ENCODE measurements at regions of chr4 and their contacts with region 1.

Region 1: DNA sequence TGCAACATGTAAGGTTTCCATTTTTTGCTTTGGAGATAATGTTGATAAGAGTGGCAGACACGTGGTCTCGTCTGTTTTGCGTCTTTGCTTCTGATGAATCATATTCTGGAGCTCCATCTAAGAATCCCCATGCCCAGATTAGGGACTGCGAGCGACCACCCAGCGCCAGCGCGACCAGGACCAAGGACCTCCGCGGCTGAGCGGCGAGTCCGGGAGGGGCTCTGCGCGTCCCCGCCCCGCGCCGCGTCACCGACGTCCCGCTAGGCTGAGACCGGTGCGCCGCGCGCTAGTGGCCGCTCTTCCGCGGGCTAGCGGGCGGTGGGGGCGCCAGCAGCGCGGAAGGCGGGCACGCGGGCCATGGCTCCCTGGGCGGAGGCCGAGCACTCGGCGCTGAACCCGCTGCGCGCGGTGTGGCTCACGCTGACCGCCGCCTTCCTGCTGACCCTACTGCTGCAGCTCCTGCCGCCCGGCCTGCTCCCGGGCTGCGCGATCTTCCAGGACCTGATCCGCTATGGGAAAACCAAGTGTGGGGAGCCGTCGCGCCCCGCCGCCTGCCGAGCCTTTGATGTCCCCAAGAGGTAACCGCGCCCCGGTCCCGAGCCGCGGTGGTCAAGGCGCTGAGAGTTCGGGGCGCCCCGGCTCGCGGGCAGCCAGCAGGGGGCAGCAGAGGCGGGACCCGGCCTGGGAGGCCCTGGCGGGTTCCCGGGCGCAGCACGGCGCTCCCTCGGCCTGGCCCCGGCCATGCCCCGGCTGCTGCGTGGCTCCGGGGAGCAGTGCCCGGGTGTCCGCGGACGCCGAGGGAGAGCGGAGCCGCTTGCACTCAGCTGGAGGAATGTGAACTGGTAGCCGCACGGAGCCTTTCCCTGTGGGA is at the start of gene SRD5A3:
- DNase-seq: peak; percentile 85
- H3K4me3 ChIP-seq: peak within 1 kb of the TSS; percentile 51 to 75 (median 65)
- H3K27ac ChIP-seq: peak within 1 kb of the TSS; percentile 69
- H3K4me1 ChIP-seq: peaks cover 11% of the 10 kb centered on the region
- H3K27me3 ChIP-seq: no peaks in the 10 kb centered on the region
- CTCF ChIP-seq: peak; percentile 84 to 92
- POLR2A ChIP-seq: peak; percentile 69
- total RNA-seq, gene SRD5A3: 24.3 and 30.4 TPM in 2 replicates

Region 2: DNA sequence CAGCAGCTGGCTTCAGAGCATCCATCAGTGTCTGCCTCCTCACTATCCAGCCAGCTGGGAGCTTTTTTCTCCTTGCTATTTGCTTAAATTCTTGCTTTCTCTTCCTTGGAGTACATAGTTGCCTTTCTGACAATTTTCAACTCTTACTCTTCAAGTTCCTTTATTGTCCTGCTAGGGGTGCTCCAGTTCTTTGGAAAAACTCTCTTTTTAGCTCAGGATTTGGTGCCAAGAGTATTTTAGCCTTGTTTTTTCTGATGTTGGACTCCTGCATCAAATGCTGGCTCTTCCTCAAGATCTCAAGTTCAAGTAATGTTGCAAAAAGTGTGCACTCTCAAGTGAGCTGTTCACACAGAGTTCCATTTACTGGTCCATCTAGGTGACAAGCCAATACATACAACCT is 347.2 kb before region 1 on chr4:
- CTCF ChIA-PET with region 1: interaction called, 11 read pairs
- POLR2A ChIA-PET with region 1: no interaction called
- dilution Hi-C with region 1: no loop called
- intact Hi-C with region 1: no loop called
- DNase-seq: peak; percentile 65
- H3K4me3 ChIP-seq: no peak overlapping the region
- H3K27ac ChIP-seq: no peak overlapping the region
- H3K4me1 ChIP-seq: no peaks in the 10 kb centered on the region
- H3K27me3 ChIP-seq: peaks cover 0 to 2% of the 10 kb centered on the region in 2 experiments
- CTCF ChIP-seq: peak; percentile 34 to 43
- POLR2A ChIP-seq: no peak

Region 3: DNA sequence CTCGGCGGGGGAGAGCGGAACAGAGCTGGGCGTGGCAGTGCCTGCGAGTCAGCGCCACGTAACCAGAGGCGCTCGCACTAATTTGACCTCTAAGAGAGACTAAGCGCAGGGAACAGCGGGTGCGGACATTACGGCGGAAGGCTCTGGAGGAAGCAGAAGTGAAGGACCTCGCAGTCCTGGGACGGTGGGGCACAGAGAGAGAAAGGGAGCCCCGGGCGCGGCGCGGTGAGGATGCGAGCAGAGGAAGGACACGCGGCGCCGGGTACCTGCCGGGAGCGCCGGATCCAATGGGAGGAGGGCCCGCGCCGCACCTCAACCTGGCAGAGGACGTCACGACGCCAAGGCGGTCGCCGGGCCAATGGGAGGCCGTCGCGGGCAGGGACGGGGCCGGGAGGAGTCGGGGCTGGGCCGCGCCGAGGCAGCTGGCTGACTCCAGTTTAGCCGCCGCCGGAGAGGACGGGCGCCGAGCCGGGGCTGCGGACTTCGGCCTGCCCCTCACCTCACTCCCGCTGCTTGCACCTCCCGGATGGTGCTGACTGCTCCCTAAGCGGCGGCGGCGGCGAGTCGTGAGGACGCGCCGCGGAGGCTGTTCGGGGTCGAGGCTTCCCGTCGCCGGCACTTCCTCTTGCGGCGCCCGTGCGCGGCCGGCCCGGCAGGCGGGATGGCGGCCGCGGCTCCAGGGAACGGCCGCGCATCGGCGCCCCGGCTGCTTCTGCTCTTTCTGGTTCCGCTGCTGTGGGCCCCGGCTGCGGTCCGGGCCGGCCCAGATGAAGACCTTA is 49.5 kb after region 1 on chr4 and contains the start of gene TMEM165:
- CTCF ChIA-PET with region 1: interaction called, 14 read pairs
- POLR2A ChIA-PET with region 1: interaction called, 4 read pairs
- dilution Hi-C with region 1: no loop called
- intact Hi-C with region 1: loop called (anchors 1 kb)
- DNase-seq: peak; percentile 88
- H3K4me3 ChIP-seq: peak within 1 kb of the TSS; percentile 89 to 98 (median 91)
- H3K27ac ChIP-seq: peak within 1 kb of the TSS; percentile 79
- H3K4me1 ChIP-seq: peaks cover 19% of the 10 kb centered on the region
- H3K27me3 ChIP-seq: no peaks in the 10 kb centered on the region
- CTCF ChIP-seq: no peak
- POLR2A ChIP-seq: peak; percentile 97
- total RNA-seq, gene TMEM165: 159 and 177 TPM in 2 replicates

Region 4: GRCh38 chr4:55435141-55435841 is 89.1 kb after region 1 on chr4:
- CTCF ChIA-PET with region 1: interaction called, 6 read pairs
- POLR2A ChIA-PET with region 1: no interaction called
- dilution Hi-C with region 1: no loop called
- intact Hi-C with region 1: loop called (anchors 2 kb)
- DNase-seq: peak; percentile 69
- H3K4me3 ChIP-seq: no peak overlapping the region
- H3K27ac ChIP-seq: no peak overlapping the region
- H3K4me1 ChIP-seq: peaks cover 13% of the 10 kb centered on the region
- H3K27me3 ChIP-seq: no peaks in the 10 kb centered on the region
- CTCF ChIP-seq: peak; percentile 24 to 30
- POLR2A ChIP-seq: no peak

Region 5: GRCh38 chr4:55866973-55867574 is 520.9 kb after region 1 on chr4:
- CTCF ChIA-PET with region 1: interaction called, 12 read pairs
- POLR2A ChIA-PET with region 1: no interaction called
- dilution Hi-C with region 1: no loop called
- intact Hi-C with region 1: loop called (anchors 2 kb)
- DNase-seq: peak; percentile 78
- H3K4me3 ChIP-seq: no peak overlapping the region
- H3K27ac ChIP-seq: peak overlapping the region; percentile 55
- H3K4me1 ChIP-seq: peaks cover 21% of the 10 kb centered on the region
- H3K27me3 ChIP-seq: no peaks in the 10 kb centered on the region
- CTCF ChIP-seq: peak; percentile 65 to 68
- POLR2A ChIP-seq: no peak

Measured in endothelial cell of umbilical vein (primary cell).